MCF 10A (cell line): ENCODE measurements at regions of chr5 and their contacts with region 1.

Region 1: DNA sequence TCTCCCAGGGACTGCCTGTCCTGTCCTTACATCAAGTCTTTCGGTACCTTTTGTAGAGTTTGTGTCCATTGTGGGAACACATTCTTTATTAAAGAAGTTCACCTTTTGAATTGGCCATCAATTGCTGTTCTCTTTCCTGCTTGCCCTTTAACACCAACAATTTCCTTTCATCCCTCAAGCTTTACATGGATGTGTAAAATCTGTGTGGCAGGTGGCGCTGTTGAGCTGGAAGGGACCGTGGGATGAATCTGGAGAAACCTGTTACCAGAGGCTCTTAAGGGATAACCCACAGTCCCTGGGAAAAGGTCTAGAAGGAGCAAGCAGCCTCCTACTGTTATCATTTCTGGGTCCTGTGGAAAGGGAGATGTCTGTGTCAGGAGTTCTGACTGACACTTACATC is 7.9 kb upstream of the ZFP62 start:
- DNase-seq: peak; percentile 91
- H3K4me3 Mint-ChIP-seq: no peak overlapping the region
- H3K27ac Mint-ChIP-seq: peak overlapping the region; percentile 87
- H3K4me1 Mint-ChIP-seq: peaks cover 29% of the 10 kb centered on the region
- H3K27me3 Mint-ChIP-seq: no peaks in the 10 kb centered on the region
- CTCF ChIP-seq: peak; percentile 94

Region 2: GRCh38 chr5:180784497-180785097 is 84.4 kb before region 1 on chr5:
- CTCF ChIA-PET with region 1: interaction called, 7 read pairs
- POLR2A ChIA-PET with region 1: interaction called, 4 read pairs
- intact Hi-C with region 1: loop called (anchors 1 kb)
- DNase-seq: peak; percentile 88
- H3K4me3 Mint-ChIP-seq: no peak overlapping the region
- H3K27ac Mint-ChIP-seq: no peak overlapping the region
- H3K4me1 Mint-ChIP-seq: peaks cover 13% of the 10 kb centered on the region
- H3K27me3 Mint-ChIP-seq: no peaks in the 10 kb centered on the region
- CTCF ChIP-seq: peak; percentile 90

Region 3: GRCh38 chr5:180802325-180803180 is 66.4 kb before region 1 on chr5 and contains the start of gene MGAT1:
- CTCF ChIA-PET with region 1: interaction called, 6 read pairs
- POLR2A ChIA-PET with region 1: interaction called, 12 read pairs
- intact Hi-C with region 1: no loop called
- DNase-seq: peak; percentile 93
- H3K4me3 Mint-ChIP-seq: peak within 1 kb of the TSS; percentile 75
- H3K27ac Mint-ChIP-seq: peak within 1 kb of the TSS; percentile 78
- H3K4me1 Mint-ChIP-seq: peaks cover 61% of the 10 kb centered on the region
- H3K27me3 Mint-ChIP-seq: no peaks in the 10 kb centered on the region
- CTCF ChIP-seq: no peak
- total RNA-seq, gene MGAT1: 135 and 150 TPM in 2 replicates

Region 4: DNA sequence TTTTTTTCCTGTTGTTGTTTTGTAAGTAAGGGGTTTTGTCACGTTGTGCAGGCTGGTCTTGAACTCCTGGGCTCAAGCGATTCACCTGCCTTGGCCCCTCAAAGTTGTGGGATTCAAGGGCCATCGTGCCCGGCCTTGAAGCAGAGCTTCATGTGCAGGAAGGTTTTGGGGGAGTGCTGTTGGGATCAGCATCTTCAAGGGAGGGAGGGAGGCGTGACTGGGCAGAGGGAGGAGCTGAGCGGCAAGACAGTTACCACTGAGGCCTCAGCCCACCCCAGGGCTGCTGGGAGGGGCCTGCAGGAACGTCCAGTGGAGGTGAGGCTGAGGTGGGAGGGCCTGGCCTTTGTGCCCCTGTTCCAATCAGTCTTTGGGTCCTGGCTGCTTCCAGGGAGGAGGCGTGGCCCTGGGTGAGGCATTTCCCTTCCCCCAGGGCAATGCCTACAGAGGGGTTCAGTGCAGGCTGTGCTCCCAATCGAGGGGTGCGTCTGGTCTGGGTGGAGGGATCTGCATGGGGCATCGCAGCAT is 240.6 kb after region 1 on chr5:
- CTCF ChIA-PET with region 1: no interaction called
- POLR2A ChIA-PET with region 1: no interaction called
- intact Hi-C with region 1: no loop called
- DNase-seq: no peak
- H3K4me3 Mint-ChIP-seq: no peak overlapping the region
- H3K27ac Mint-ChIP-seq: no peak overlapping the region
- H3K4me1 Mint-ChIP-seq: no peaks in the 10 kb centered on the region
- H3K27me3 Mint-ChIP-seq: peaks cover 27% of the 10 kb centered on the region
- CTCF ChIP-seq: no peak

Region 5: GRCh38 chr5:181149806-181150733 is 281.1 kb after region 1 on chr5:
- CTCF ChIA-PET with region 1: interaction called, 39 read pairs
- POLR2A ChIA-PET with region 1: interaction called, 7 read pairs
- intact Hi-C with region 1: no loop called
- DNase-seq: no peak
- H3K4me3 Mint-ChIP-seq: no peak overlapping the region
- H3K27ac Mint-ChIP-seq: no peak overlapping the region
- H3K4me1 Mint-ChIP-seq: peaks cover 24% of the 10 kb centered on the region
- H3K27me3 Mint-ChIP-seq: peaks cover 25% of the 10 kb centered on the region
- CTCF ChIP-seq: no peak

Region 6: GRCh38 chr5:181159286-181159829 is 290.4 kb after region 1 on chr5:
- CTCF ChIA-PET with region 1: interaction called, 39 read pairs
- POLR2A ChIA-PET with region 1: interaction called, 6 read pairs
- intact Hi-C with region 1: loop called (anchors 1 kb)
- DNase-seq: peak; percentile 94
- H3K4me3 Mint-ChIP-seq: peak overlapping the region; percentile 66
- H3K27ac Mint-ChIP-seq: peak overlapping the region; percentile 97
- H3K4me1 Mint-ChIP-seq: peaks cover 11% of the 10 kb centered on the region
- H3K27me3 Mint-ChIP-seq: peaks cover 25% of the 10 kb centered on the region
- CTCF ChIP-seq: peak; percentile 97

Region 7: GRCh38 chr5:181173420-181174342 is 304.7 kb after region 1 on chr5:
- CTCF ChIA-PET with region 1: interaction called, 8 read pairs
- POLR2A ChIA-PET with region 1: interaction called, 15 read pairs
- intact Hi-C with region 1: no loop called
- DNase-seq: peak; percentile 87
- H3K4me3 Mint-ChIP-seq: peak overlapping the region; percentile 84
- H3K27ac Mint-ChIP-seq: peak overlapping the region; percentile 46
- H3K4me1 Mint-ChIP-seq: peaks cover 32% of the 10 kb centered on the region
- H3K27me3 Mint-ChIP-seq: no peaks in the 10 kb centered on the region
- CTCF ChIP-seq: peak; percentile 13